ENCODE measurements at regions of chr18 and their contacts with region 1.

Region 1: GRCh38 chr18:22742409-22742808 is 190.7 kb upstream of the RBBP8 start:
- DNase-seq: no peak
- ATAC-seq: no peak
- H3K4me3 ChIP-seq: no peak overlapping the region
- H3K27ac ChIP-seq: no peak overlapping the region
- H3K4me1 ChIP-seq: no peaks in the 10 kb centered on the region
- H3K27me3 ChIP-seq: no peaks in the 10 kb centered on the region

Region 2: GRCh38 chr18:22432672-22433137 is 309.7 kb before region 1 on chr18:
- intact Hi-C with region 1: no loop called
- DNase-seq: peak; percentile 90 to 95 (median 91)
- ATAC-seq: peak; percentile 95 to 97
- H3K4me3 ChIP-seq: no peak overlapping the region
- H3K27ac ChIP-seq: peak overlapping the region; percentile 70
- H3K4me1 ChIP-seq: peaks cover 2% of the 10 kb centered on the region
- H3K27me3 ChIP-seq: no peaks in the 10 kb centered on the region

Region 3: DNA sequence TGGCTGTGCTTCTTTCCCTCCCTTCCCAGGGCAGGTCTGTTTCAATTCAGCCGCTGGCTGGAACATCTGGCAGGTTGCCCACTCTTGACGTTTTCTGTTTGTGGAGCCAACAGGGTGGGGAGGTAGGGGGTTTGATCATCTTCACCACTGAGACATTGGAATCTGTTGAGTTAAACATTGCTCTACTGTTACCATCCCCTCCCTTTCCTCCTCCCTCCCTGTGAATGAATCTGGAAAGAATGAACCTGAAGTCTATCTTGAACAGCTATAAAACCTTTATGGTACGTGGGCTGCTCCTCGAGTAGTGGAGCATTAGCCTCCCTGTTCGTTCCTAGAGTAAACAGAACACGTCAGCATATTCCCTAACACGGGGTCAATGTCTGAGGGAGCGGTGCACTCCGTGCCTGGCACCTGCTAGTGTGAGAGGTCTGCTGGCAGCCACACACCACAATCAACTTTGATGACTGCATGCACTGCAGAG is 59.2 kb before region 1 on chr18:
- intact Hi-C with region 1: loop called in 1 of 4 experiments (anchors 10 kb)
- DNase-seq: peak; percentile 76 to 81 (median 79)
- ATAC-seq: peak; percentile 86 to 96
- H3K4me3 ChIP-seq: no peak overlapping the region
- H3K27ac ChIP-seq: no peak overlapping the region
- H3K4me1 ChIP-seq: no peaks in the 10 kb centered on the region
- H3K27me3 ChIP-seq: no peaks in the 10 kb centered on the region

Region 4: DNA sequence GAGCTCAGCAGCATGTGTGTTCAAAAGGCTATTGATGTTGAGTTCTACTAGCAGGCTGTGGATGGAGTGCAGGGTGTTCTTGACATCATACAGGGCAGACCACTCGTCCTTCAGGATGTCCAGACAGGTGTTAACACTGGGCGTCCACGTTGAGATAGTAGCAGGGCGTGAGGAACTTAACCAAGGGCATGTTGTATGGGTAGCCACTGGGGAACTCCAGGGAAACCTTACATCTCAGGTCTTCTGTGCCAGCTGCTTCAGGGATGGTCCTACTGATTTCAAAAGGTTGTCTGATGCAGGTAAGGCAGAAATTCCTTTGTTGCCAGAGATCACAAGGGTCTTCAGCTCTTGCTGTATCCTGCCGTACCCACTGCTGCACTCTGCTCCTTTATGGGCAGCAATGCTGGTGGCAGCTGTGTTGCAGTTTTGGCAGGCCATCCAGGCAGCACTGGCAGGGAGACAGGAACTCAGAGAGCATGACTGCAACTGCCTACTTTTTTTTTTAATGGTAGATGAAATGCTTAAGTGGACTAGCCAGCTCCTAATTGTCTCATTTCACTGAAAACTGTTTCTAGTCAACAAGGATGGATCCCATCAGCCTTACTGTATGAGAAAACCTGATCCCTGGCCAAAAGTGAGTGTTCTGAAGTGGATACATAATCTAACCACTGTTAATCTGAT is 158.3 kb after region 1 on chr18:
- intact Hi-C with region 1: no loop called
- DNase-seq: peak; percentile 31 to 71 (median 66)
- ATAC-seq: peak in 1 of 2 donors; percentile 63
- H3K4me3 ChIP-seq: no peak overlapping the region
- H3K27ac ChIP-seq: no peak overlapping the region
- H3K4me1 ChIP-seq: no peaks in the 10 kb centered on the region
- H3K27me3 ChIP-seq: no peaks in the 10 kb centered on the region

Measured in right cardiac atrium (tissue), 5 donors.